ENCODE measurements at regions of chr1 and their contacts with region 1.

Region 1: GRCh38 chr1:6438047-6438525 is 13.5 kb downstream of the ESPN start:
- DNase-seq: peak; percentile 84 to 91
- H3K4me3 ChIP-seq: no peak overlapping the region
- H3K27ac ChIP-seq: no peak overlapping the region
- H3K4me1 ChIP-seq: peaks cover 3 to 11% (median 4%) of the 10 kb centered on the region in 4 experiments
- H3K27me3 ChIP-seq: peaks cover 0 to 20% (median 12%) of the 10 kb centered on the region in 4 experiments; a peak in 5 of 7 replicates
- CTCF ChIP-seq: peak; percentile 90 to 97 (median 96)
- EP300 ChIP-seq: no peak
- POLR2A ChIP-seq: no peak
- RAD21 ChIP-seq: peak; percentile 79 to 81

Region 2: DNA sequence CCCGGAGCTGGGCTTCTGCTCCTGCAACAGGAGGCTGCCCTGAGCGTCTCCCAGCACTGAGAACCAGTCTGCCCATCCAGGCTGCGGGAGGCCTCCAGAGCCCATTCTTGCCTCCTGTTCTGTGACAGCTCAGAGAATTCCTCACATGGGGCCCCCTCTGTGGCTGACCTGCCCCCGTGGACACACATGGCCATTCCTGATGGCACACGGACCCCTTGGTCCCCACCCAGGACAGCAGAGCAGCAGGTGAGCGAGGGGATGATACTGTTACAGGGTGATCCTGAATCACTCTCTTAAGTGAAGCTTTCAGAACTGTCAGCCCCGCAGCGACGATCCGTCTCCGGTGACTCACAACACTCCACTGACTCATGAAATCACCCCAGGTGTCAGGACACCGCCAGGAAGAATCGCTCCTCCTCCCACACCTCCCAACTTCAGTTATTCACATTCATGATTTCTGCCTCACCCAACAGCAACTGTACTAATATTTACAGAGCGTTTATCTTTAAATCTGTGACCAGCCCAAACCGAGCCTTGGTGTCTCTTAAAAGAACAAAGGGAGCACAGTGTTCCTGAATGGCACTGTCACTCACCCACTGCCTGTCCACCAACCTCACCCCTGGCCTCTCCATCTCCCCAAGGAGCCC is 280.4 kb before region 1 on chr1:
- CTCF ChIA-PET with region 1: no interaction called
- POLR2A ChIA-PET with region 1: no interaction called
- DNase-seq: no peak
- H3K4me3 ChIP-seq: no peak overlapping the region
- H3K27ac ChIP-seq: no peak overlapping the region
- H3K4me1 ChIP-seq: peaks cover 0 to 15% (median 2%) of the 10 kb centered on the region in 4 experiments; a peak in 4 of 7 replicates
- H3K27me3 ChIP-seq: no peaks in the 10 kb centered on the region
- CTCF ChIP-seq: no peak
- EP300 ChIP-seq: no peak
- POLR2A ChIP-seq: no peak
- RAD21 ChIP-seq: no peak

Region 3: GRCh38 chr1:6269720-6270400 is 168.2 kb before region 1 on chr1:
- CTCF ChIA-PET with region 1: interaction called, 11 read pairs
- POLR2A ChIA-PET with region 1: no interaction called
- DNase-seq: no peak
- H3K4me3 ChIP-seq: no peak overlapping the region
- H3K27ac ChIP-seq: no peak overlapping the region
- H3K4me1 ChIP-seq: peaks cover 0 to 18% (median 8%) of the 10 kb centered on the region in 4 experiments; a peak in 6 of 7 replicates
- H3K27me3 ChIP-seq: no peaks in the 10 kb centered on the region
- CTCF ChIP-seq: no peak
- EP300 ChIP-seq: no peak
- POLR2A ChIP-seq: no peak
- RAD21 ChIP-seq: no peak

Region 4: DNA sequence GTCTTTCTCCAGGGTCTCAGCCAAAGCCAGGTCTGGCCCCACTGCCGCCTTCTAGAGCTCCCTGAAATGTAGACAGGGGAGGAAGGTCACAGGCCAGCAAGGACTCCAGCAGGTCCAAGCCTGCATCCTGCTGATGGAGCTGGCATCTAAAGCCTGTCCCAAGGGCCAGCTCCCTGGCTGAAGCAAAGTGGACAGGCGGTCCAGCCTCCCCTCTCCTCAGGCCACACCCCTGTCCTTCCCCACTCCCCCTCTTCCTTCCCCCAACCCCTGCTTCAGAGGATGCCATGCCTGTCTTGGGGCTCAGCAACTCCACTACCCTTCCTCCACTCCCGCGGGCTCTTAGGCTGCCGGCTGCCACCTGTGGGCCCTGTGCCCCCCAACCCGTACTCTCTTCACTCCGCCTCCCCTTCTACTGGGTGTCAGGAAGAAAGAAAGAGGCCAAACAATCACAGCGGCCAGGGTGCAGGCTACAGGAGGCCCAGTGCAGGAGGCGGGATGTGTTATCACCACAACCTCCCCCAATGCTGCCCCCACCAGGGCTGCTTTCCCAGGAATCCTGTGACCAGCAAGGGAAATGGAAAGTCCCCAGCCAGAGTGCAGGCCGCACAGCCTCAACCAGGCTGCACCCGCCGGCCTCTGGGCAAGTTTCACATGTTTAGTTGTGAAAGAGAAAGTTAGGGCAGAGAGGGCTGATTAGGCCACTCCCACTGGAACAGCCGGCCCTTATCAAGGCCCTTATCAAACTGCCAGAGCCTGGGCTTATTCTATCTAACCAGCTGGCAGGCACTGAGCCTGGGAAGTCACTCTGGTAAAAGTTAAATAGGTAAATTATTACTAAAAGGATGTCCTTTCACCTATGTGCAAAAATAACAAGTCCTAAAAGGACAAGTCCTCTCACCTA is 78.6 kb before region 1 on chr1:
- CTCF ChIA-PET with region 1: interaction called, 89 read pairs
- POLR2A ChIA-PET with region 1: interaction called, 3 read pairs
- DNase-seq: peak in 1 of 2 experiments; percentile 57
- H3K4me3 ChIP-seq: no peak overlapping the region
- H3K27ac ChIP-seq: 0 out of 2 replicates have a peak overlapping the region, but pooled peaks have one; percentile 21
- H3K4me1 ChIP-seq: peaks cover 3 to 27% (median 14%) of the 10 kb centered on the region in 4 experiments
- H3K27me3 ChIP-seq: no peaks in the 10 kb centered on the region
- CTCF ChIP-seq: no peak
- EP300 ChIP-seq: no peak
- POLR2A ChIP-seq: no peak
- RAD21 ChIP-seq: no peak

Region 5: DNA sequence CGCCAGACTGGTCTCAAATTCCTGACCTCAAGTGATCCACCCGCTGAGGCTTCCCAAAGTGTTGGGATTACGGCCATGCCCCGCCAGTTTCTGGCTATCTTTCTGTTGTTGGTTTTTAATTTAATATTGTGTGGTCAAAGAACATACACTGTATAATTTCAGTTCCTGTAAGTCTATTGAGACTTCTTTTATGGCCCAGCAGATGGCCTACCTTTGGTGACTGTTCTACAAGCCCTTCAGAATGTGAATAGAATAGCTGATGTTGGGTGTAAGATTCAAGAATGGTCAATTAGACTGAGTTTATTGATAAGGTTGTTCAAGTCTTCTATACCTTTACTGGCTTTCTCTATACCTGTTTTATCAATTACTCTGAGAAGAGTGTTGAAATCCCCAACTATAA is 29.0 kb before region 1 on chr1:
- CTCF ChIA-PET with region 1: interaction called, 321 read pairs
- POLR2A ChIA-PET with region 1: interaction called, 3 read pairs
- DNase-seq: no peak
- H3K4me3 ChIP-seq: no peak overlapping the region
- H3K27ac ChIP-seq: no peak overlapping the region
- H3K4me1 ChIP-seq: no peaks in the 10 kb centered on the region
- H3K27me3 ChIP-seq: peaks cover 0 to 7% (median 4%) of the 10 kb centered on the region in 4 experiments; a peak in 5 of 7 replicates
- CTCF ChIP-seq: no peak
- EP300 ChIP-seq: no peak
- POLR2A ChIP-seq: no peak
- RAD21 ChIP-seq: no peak

Region 6: GRCh38 chr1:6454856-6455751 is 17.0 kb after region 1 on chr1:
- CTCF ChIA-PET with region 1: interaction called, 75 read pairs
- POLR2A ChIA-PET with region 1: interaction called, 5 read pairs
- DNase-seq: no peak
- H3K4me3 ChIP-seq: peak overlapping the region in 1 of 4 experiments; percentile 44; a peak in 2 of 8 replicates
- H3K27ac ChIP-seq: no peak overlapping the region
- H3K4me1 ChIP-seq: peaks cover 0 to 20% (median 10%) of the 10 kb centered on the region in 4 experiments; a peak in 5 of 7 replicates
- H3K27me3 ChIP-seq: peaks cover 5 to 37% (median 21%) of the 10 kb centered on the region in 4 experiments; a peak in 6 of 7 replicates
- CTCF ChIP-seq: peak in 2 of 3 experiments; percentile 49 to 82; a peak in 3 of 4 replicates
- EP300 ChIP-seq: no peak
- POLR2A ChIP-seq: no peak
- RAD21 ChIP-seq: peak in 1 of 2 experiments; percentile 3; a peak in 1 of 4 replicates

Region 7: GRCh38 chr1:6624710-6625583 is 186.9 kb after region 1 on chr1 and contains the start of gene THAP3:
- CTCF ChIA-PET with region 1: no interaction called
- POLR2A ChIA-PET with region 1: no interaction called
- DNase-seq: peak in 1 of 2 experiments; percentile 93
- H3K4me3 ChIP-seq: peak within 1 kb of the TSS; percentile 74 to 83 (median 76)
- H3K27ac ChIP-seq: peak within 1 kb of the TSS; percentile 75
- H3K4me1 ChIP-seq: 0 out of 7 replicates have a peak, but pooled peaks cover 0 to 2% (median 0%) of the 10 kb centered on the region in 4 experiments
- H3K27me3 ChIP-seq: no peaks in the 10 kb centered on the region
- CTCF ChIP-seq: peak in 1 of 3 experiments; percentile 38; a peak in 2 of 4 replicates
- EP300 ChIP-seq: 0 out of 3 replicates have a peak, but pooled peaks of 1 of the 2 experiments have one; percentile 13
- POLR2A ChIP-seq: peak in 1 of 2 experiments; percentile 25; a peak in 1 of 3 replicates
- RAD21 ChIP-seq: no peak
- total RNA-seq, gene THAP3: 12.4 and 15.3 TPM in 2 replicates

Region 8: GRCh38 chr1:6638226-6638625 is 200.1 kb after region 1 on chr1:
- CTCF ChIA-PET with region 1: no interaction called
- POLR2A ChIA-PET with region 1: no interaction called
- DNase-seq: no peak
- H3K4me3 ChIP-seq: no peak overlapping the region
- H3K27ac ChIP-seq: no peak overlapping the region
- H3K4me1 ChIP-seq: no peaks in the 10 kb centered on the region
- H3K27me3 ChIP-seq: no peaks in the 10 kb centered on the region
- CTCF ChIP-seq: no peak
- EP300 ChIP-seq: no peak
- POLR2A ChIP-seq: no peak
- RAD21 ChIP-seq: no peak

Measured in H1 (cell line).